Motor neuron (in vitro differentiated cells): ENCODE measurements at regions of chr1 and their contacts with region 1.

Region 1: GRCh38 chr1:12314333-12314903 is 84.6 kb downstream of the VPS13D start:
- ATAC-seq: peak; percentile 24 to 94 (median 59)
- H3K4me3 ChIP-seq: no peak overlapping the region
- H3K27ac ChIP-seq: no peak overlapping the region
- H3K4me1 ChIP-seq: peaks cover 0 to 9% of the 10 kb centered on the region in 2 donors

Region 2: GRCh38 chr1:12132092-12132491 is 182.3 kb before region 1 on chr1:
- in situ Hi-C with region 1: no loop called
- ATAC-seq: peak in 3 of 8 experiments; percentile 46 to 83 (median 82)
- H3K4me3 ChIP-seq: no peak overlapping the region
- H3K27ac ChIP-seq: no peak overlapping the region
- H3K4me1 ChIP-seq: no peaks in the 10 kb centered on the region

Region 3: GRCh38 chr1:12619792-12620487 is 305.5 kb after region 1 on chr1:
- in situ Hi-C with region 1: loop called in 5 of 9 experiments (anchors 10 to 25 kb)
- ATAC-seq: peak; percentile 17 to 67 (median 53)
- H3K4me3 ChIP-seq: peak overlapping the region in 4 of 5 donors; percentile 40 to 66 (median 50)
- H3K27ac ChIP-seq: peak overlapping the region; percentile 61 to 83
- H3K4me1 ChIP-seq: peaks cover 18 to 20% of the 10 kb centered on the region in 2 donors

Region 4: DNA sequence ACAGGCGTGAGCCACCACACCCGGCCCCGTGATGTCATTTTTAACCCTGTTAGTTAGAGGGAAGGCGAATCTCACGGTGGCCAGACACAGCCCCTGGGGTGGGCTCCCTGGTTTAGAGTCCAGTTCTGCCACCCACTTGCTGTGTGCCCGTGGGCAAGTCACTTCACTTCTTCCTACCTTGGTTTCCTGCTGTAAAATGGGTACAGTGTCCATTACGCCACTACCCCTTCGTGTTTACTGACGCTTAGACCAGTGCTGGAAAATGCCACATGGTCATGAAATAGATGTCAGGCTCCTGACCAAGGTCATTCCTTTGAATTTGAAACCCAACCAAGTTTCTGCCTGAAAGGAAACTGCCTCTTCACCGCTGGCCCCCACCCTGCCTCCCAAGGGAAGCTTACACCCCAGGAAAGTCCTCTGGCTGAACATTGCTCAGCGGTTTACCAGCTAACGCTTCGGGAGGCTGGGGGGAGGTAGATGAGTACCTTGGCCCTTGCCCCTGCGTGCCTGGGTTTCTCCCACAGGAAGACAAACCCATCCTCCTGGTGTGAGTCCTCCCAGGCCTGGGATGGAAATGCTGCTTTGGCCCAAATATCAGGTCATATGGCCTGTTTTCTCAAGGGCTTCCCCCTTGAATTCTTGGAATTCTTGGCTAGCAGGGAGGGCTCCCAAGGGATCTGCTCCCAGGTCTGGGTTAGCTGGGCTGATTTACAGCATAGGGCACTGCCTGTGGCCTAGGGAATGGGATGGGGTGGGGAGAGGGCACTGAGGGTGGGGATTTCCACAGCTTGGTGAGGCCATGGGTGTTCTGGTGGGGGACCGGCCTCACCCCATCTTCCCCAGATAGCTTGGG is 321.9 kb after region 1 on chr1:
- in situ Hi-C with region 1: loop called in 2 of 9 experiments (anchors 25 kb)
- ATAC-seq: peak in 2 of 8 experiments; percentile 27 to 39
- H3K4me3 ChIP-seq: no peak overlapping the region
- H3K27ac ChIP-seq: no peak overlapping the region
- H3K4me1 ChIP-seq: no peaks in the 10 kb centered on the region